ENCODE measurements at regions of chr15 and their contacts with region 1.

Region 1: GRCh38 chr15:60179786-60180391 is 175.8 kb downstream of the FOXB1 start:
- DNase-seq: peak; percentile 25
- ATAC-seq: peak; percentile 71
- H3K4me3 ChIP-seq: no peak overlapping the region
- H3K27ac ChIP-seq: no peak overlapping the region
- H3K4me1 ChIP-seq: no peaks in the 10 kb centered on the region
- H3K27me3 ChIP-seq: peaks cover 1 to 13% of the 10 kb centered on the region in 2 experiments; a peak in 1 of 5 replicates
- CTCF ChIP-seq: peak; percentile 61
- EP300 ChIP-seq: no peak
- POLR2A ChIP-seq: no peak
- RAD21 ChIP-seq: no peak; the same call in 1 of the 2 replicates

Region 2: GRCh38 chr15:59725172-59725486 is 454.8 kb before region 1 on chr15:
- CTCF ChIA-PET with region 1: interaction called, 9 read pairs
- POLR2A ChIA-PET with region 1: no interaction called
- in situ Hi-C with region 1: loop called (anchors 25 kb)
- intact Hi-C with region 1: loop called (anchors 2 kb)
- DNase-seq: no peak
- ATAC-seq: no peak
- H3K4me3 ChIP-seq: no peak overlapping the region
- H3K27ac ChIP-seq: no peak overlapping the region
- H3K4me1 ChIP-seq: no peaks in the 10 kb centered on the region
- H3K27me3 ChIP-seq: peaks cover 0 to 29% of the 10 kb centered on the region in 2 experiments; a peak in 3 of 5 replicates
- CTCF ChIP-seq: no peak
- EP300 ChIP-seq: no peak
- POLR2A ChIP-seq: no peak
- RAD21 ChIP-seq: no peak

Region 3: GRCh38 chr15:59741274-59741906 is 438.5 kb before region 1 on chr15:
- CTCF ChIA-PET with region 1: no interaction called
- POLR2A ChIA-PET with region 1: no interaction called
- in situ Hi-C with region 1: loop called (anchors 25 kb)
- intact Hi-C with region 1: no loop called
- DNase-seq: peak; percentile 18
- ATAC-seq: peak; percentile 81
- H3K4me3 ChIP-seq: no peak overlapping the region
- H3K27ac ChIP-seq: no peak overlapping the region
- H3K4me1 ChIP-seq: peaks cover 28% of the 10 kb centered on the region
- H3K27me3 ChIP-seq: no peaks in the 10 kb centered on the region; a peak in 1 of 5 replicates
- CTCF ChIP-seq: peak; percentile 70
- EP300 ChIP-seq: no peak
- POLR2A ChIP-seq: no peak
- RAD21 ChIP-seq: no peak

Region 4: GRCh38 chr15:59917504-59918157 is 262.3 kb before region 1 on chr15:
- CTCF ChIA-PET with region 1: interaction called, 8 read pairs
- POLR2A ChIA-PET with region 1: no interaction called
- in situ Hi-C with region 1: no loop called
- intact Hi-C with region 1: loop called (anchors 1 kb)
- DNase-seq: peak; percentile 50
- ATAC-seq: peak; percentile 99
- H3K4me3 ChIP-seq: no peak overlapping the region
- H3K27ac ChIP-seq: no peak overlapping the region
- H3K4me1 ChIP-seq: no peaks in the 10 kb centered on the region
- H3K27me3 ChIP-seq: peaks cover 0 to 5% of the 10 kb centered on the region in 2 experiments; a peak in 1 of 5 replicates
- CTCF ChIP-seq: peak; percentile 83
- EP300 ChIP-seq: no peak
- POLR2A ChIP-seq: no peak
- RAD21 ChIP-seq: peak; percentile 53

Region 5: GRCh38 chr15:60324706-60325438 is 145.0 kb after region 1 on chr15:
- CTCF ChIA-PET with region 1: no interaction called
- POLR2A ChIA-PET with region 1: no interaction called
- in situ Hi-C with region 1: no loop called
- intact Hi-C with region 1: no loop called
- DNase-seq: no peak
- ATAC-seq: no peak
- H3K4me3 ChIP-seq: no peak overlapping the region
- H3K27ac ChIP-seq: no peak overlapping the region
- H3K4me1 ChIP-seq: no peaks in the 10 kb centered on the region
- H3K27me3 ChIP-seq: peaks cover 2 to 40% of the 10 kb centered on the region in 2 experiments
- CTCF ChIP-seq: no peak
- EP300 ChIP-seq: no peak
- POLR2A ChIP-seq: no peak
- RAD21 ChIP-seq: no peak